H1 (cell line): ENCODE measurements at regions of chr3 and their contacts with region 1.

Region 1: DNA sequence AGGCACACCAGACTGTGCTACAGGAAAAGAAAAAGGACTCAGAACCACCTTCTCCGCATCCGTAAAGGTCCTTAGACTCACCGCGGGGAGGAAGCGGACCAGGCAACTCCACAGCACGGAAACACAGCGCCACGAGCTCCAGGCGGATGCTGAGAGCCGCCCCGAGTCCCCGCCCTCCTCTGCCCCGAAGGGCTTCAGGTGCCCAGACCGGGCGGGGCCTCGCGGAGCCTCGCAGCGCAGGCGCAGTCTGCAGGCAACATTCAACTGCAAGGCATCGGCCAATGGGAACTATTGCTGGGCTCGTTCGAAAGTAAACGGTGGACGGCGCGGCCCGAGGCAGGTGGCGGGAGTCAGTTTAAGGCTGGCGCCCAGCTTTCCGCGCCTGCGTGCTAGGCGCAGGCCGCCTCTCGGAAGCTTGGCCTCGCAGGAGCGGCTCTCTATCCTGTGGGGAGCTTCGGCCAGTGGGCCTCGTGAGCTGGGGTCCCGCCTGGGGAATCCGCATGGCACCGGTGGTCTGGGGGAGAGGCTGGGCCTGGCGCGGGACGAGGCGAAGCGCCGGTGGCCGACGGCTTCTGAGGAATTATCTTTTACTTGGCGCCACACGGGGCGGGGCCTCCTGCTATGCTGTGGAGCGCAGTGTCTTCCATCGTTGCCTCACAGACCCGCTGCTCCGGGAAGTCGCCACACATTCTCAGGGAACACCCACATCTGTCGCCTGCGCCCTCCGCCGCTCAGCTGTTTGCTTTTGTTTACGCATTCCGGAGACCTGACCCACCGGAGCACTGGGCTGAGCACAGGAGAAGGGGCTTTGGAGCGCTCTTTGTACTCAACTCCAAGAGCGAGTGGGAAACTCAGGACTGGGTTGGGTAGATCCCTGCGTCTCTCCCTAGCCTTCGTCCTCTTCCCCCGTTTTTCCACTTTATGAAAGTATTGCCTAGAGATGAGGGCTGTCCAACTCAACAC is at the start of gene TRIM59:
- DNase-seq: peak; percentile 97
- H3K4me3 ChIP-seq: peak within 1 kb of the TSS; percentile 92 to 97 (median 94)
- H3K27ac ChIP-seq: peak within 1 kb of the TSS; percentile 95
- H3K4me1 ChIP-seq: peaks cover 0 to 5% (median 0%) of the 10 kb centered on the region in 4 experiments; a peak in 3 of 7 replicates
- H3K27me3 ChIP-seq: no peaks in the 10 kb centered on the region
- CTCF ChIP-seq: peak in 1 of 3 experiments; percentile 9; a peak in 1 of 4 replicates
- EP300 ChIP-seq: no peak
- POLR2A ChIP-seq: peak; percentile 87 to 93
- RAD21 ChIP-seq: no peak
- total RNA-seq, gene TRIM59: 53.4 and 57.8 TPM in 2 replicates

Region 2: GRCh38 chr3:160399125-160400029 is 50.5 kb before region 1 on chr3 and contains the starts of genes IFT80 and SMC4:
- CTCF ChIA-PET with region 1: interaction called, 4 read pairs
- POLR2A ChIA-PET with region 1: interaction called, 26 read pairs
- DNase-seq: peak; percentile 76 to 93
- H3K4me3 ChIP-seq: peak within 1 kb of the TSS; percentile 84 to 99 (median 92)
- H3K27ac ChIP-seq: peak within 1 kb of the TSS; percentile 97
- H3K4me1 ChIP-seq: no peaks in the 10 kb centered on the region; a peak in 3 of 7 replicates
- H3K27me3 ChIP-seq: no peaks in the 10 kb centered on the region
- CTCF ChIP-seq: no peak
- EP300 ChIP-seq: no peak
- POLR2A ChIP-seq: peak; percentile 85 to 93
- RAD21 ChIP-seq: no peak; a peak in 1 of 4 replicates
- total RNA-seq, gene IFT80: 22.4 and 25.9 TPM in 2 replicates
- total RNA-seq, gene SMC4: 118 and 129 TPM in 2 replicates

Region 3: GRCh38 chr3:160434071-160434470 is 15.8 kb before region 1 on chr3:
- CTCF ChIA-PET with region 1: interaction called, 4 read pairs
- POLR2A ChIA-PET with region 1: interaction called, 70 read pairs
- DNase-seq: no peak
- H3K4me3 ChIP-seq: no peak overlapping the region
- H3K27ac ChIP-seq: no peak overlapping the region
- H3K4me1 ChIP-seq: peaks cover 0 to 2% (median 0%) of the 10 kb centered on the region in 4 experiments; a peak in 2 of 7 replicates
- H3K27me3 ChIP-seq: no peaks in the 10 kb centered on the region
- CTCF ChIP-seq: no peak
- EP300 ChIP-seq: no peak
- POLR2A ChIP-seq: no peak
- RAD21 ChIP-seq: no peak

Region 4: GRCh38 chr3:160464321-160464720 is 14.4 kb after region 1 on chr3:
- CTCF ChIA-PET with region 1: interaction called, 13 read pairs
- POLR2A ChIA-PET with region 1: interaction called, 29 read pairs
- DNase-seq: no peak
- H3K4me3 ChIP-seq: no peak overlapping the region
- H3K27ac ChIP-seq: no peak overlapping the region
- H3K4me1 ChIP-seq: peaks cover 0 to 4% (median 0%) of the 10 kb centered on the region in 4 experiments; a peak in 1 of 7 replicates
- H3K27me3 ChIP-seq: no peaks in the 10 kb centered on the region; a peak in 1 of 7 replicates
- CTCF ChIP-seq: no peak
- EP300 ChIP-seq: no peak
- POLR2A ChIP-seq: no peak
- RAD21 ChIP-seq: no peak

Region 5: DNA sequence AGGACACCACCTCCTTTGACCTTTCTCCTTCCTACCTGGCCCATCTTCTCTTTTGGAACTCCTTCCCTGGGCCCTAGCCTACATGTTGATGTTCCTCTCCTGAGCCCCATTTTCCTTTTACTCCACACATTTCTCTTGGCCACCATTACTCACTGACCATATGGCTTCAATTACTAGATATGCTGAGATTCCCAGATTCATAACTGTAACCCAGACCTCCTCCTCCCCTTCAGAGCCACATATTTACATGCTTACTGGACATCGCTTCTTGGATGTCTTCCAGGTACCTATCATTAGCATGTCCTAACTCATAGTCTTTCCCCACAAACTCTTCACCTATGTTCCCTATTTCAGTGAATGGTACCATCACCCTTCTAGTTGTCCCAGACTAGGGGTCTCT is 24.1 kb after region 1 on chr3:
- CTCF ChIA-PET with region 1: interaction called, 4 read pairs
- POLR2A ChIA-PET with region 1: interaction called, 15 read pairs
- DNase-seq: no peak
- H3K4me3 ChIP-seq: no peak overlapping the region
- H3K27ac ChIP-seq: no peak overlapping the region
- H3K4me1 ChIP-seq: no peaks in the 10 kb centered on the region
- H3K27me3 ChIP-seq: no peaks in the 10 kb centered on the region
- CTCF ChIP-seq: no peak
- EP300 ChIP-seq: no peak
- POLR2A ChIP-seq: no peak
- RAD21 ChIP-seq: no peak

Region 6: GRCh38 chr3:160498202-160498601 is 48.3 kb after region 1 on chr3:
- CTCF ChIA-PET with region 1: no interaction called
- POLR2A ChIA-PET with region 1: interaction called, 16 read pairs
- DNase-seq: no peak
- H3K4me3 ChIP-seq: no peak overlapping the region
- H3K27ac ChIP-seq: no peak overlapping the region
- H3K4me1 ChIP-seq: no peaks in the 10 kb centered on the region
- H3K27me3 ChIP-seq: peaks cover 0 to 1% (median 0%) of the 10 kb centered on the region in 4 experiments; a peak in 1 of 7 replicates
- CTCF ChIP-seq: no peak
- EP300 ChIP-seq: no peak
- POLR2A ChIP-seq: no peak
- RAD21 ChIP-seq: no peak

Region 7: GRCh38 chr3:160565442-160566403 is 115.8 kb after region 1 on chr3 and contains the start of gene KPNA4:
- CTCF ChIA-PET with region 1: no interaction called
- POLR2A ChIA-PET with region 1: interaction called, 23 read pairs
- DNase-seq: peak; percentile 92 to 95
- H3K4me3 ChIP-seq: peak within 1 kb of the TSS; percentile 76 to 91 (median 82)
- H3K27ac ChIP-seq: peak within 1 kb of the TSS; percentile 91
- H3K4me1 ChIP-seq: peaks cover 0 to 4% (median 1%) of the 10 kb centered on the region in 4 experiments; a peak in 4 of 7 replicates
- H3K27me3 ChIP-seq: no peaks in the 10 kb centered on the region
- CTCF ChIP-seq: no peak
- EP300 ChIP-seq: no peak
- POLR2A ChIP-seq: peak; percentile 81 to 84
- RAD21 ChIP-seq: no peak; a peak in 1 of 4 replicates
- total RNA-seq, gene KPNA4: 81.9 and 86.7 TPM in 2 replicates